Sigmoid colon (tissue), 7 donors: ENCODE measurements at regions of chr4 and their contacts with region 1.

Region 1: DNA sequence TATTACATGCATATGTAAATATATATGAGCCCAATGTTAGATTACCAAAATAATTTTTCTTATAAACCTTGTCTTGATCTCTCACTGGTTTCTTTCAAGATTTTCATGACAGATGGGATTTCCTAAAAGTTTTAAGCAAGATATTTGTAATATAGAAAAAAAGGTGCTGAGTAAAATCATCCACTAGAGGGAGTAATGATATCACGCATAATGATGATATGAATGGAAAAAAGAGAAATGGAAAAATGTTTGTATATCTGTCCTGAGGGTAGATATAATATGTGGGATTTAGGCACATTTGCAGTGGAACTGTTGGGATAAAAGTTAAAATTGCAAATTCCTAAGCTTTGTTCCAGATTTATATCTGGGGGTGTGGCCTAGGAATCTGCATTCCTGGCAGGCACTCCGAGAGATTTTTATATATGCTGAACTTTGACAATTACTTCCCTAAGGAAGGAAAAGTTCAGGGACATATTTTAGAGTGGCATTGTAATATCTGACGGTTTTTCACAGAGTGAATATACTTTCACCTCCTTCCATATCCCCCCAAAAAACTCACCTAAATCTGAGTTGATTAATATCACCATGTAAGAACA is 60.5 kb downstream of the TMA16 start:
- DNase-seq: no peak
- H3K4me3 ChIP-seq: no peak overlapping the region
- H3K27ac ChIP-seq: no peak overlapping the region
- H3K4me1 ChIP-seq: peaks cover 0 to 8% (median 7%) of the 10 kb centered on the region in 4 donors
- H3K27me3 ChIP-seq: no peaks in the 10 kb centered on the region
- CTCF ChIP-seq: peak in 2 of 4 experiments; percentile 21 to 59
- EP300 ChIP-seq: no peak
- POLR2A ChIP-seq: no peak

Region 2: GRCh38 chr4:164731827-164732474 is 1177.0 kb after region 1 on chr4:
- intact Hi-C with region 1: loop called (anchors 5 kb)
- DNase-seq: no peak
- H3K4me3 ChIP-seq: no peak overlapping the region
- H3K27ac ChIP-seq: no peak overlapping the region
- H3K4me1 ChIP-seq: no peaks in the 10 kb centered on the region
- H3K27me3 ChIP-seq: no peaks in the 10 kb centered on the region
- CTCF ChIP-seq: peak; percentile 17 to 74 (median 50)
- EP300 ChIP-seq: no peak
- POLR2A ChIP-seq: no peak